CD8-positive, alpha-beta T cell (primary cell): ENCODE measurements at regions of chr1 and their contacts with region 1.

Region 1: DNA sequence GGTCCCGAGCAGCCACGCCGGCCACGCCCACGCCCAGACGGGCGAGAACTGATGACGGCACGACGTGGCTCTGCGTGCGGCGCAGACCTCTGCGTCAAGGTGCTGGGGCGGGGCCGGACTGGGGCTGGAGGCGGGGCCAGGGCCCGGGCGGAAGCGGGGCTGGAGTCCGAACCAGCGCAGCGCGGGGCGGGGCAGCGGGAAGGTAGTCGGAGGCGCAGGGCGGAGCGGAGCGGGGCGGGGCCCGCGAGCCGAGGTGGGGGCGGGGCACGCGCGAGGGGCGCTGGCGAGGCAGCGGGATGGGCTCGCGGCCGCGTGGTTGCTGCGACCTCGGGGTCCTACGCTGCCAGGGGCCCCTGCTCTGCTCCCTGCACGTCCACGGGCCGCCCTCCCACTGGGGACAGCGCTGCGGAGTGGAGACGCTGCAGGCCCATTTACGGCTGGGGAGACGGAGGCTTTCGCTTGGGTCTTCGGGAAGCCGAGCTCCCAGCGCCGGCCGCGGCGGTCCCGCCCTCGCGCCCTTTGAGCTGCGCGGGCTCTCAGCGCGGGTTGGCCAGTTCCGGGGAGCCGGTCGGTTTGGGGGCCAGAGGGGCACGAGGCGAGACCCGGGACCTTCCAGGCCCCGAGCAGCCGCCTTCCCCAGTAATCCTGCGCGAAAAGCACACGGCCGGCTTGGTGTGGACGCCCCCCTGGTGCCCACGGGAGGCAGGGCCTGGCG is at the start of gene PEX10:
- DNase-seq: peak; percentile 97 to 100 (median 99)
- ATAC-seq: peak; percentile 91
- H3K4me3 ChIP-seq: peak within 1 kb of the TSS; percentile 64 to 89
- H3K4me3 Mint-ChIP-seq: peak within 1 kb of the TSS; percentile 86
- H3K27ac ChIP-seq: peak within 1 kb of the TSS; percentile 81 to 93
- H3K27ac Mint-ChIP-seq: peak within 1 kb of the TSS; percentile 93
- H3K4me1 ChIP-seq: peaks cover 53% of the 10 kb centered on the region
- H3K4me1 Mint-ChIP-seq: peaks cover 40% of the 10 kb centered on the region
- H3K27me3 ChIP-seq: no peaks in the 10 kb centered on the region
- H3K27me3 Mint-ChIP-seq: no peaks in the 10 kb centered on the region
- CTCF ChIP-seq: no peak
- total RNA-seq, gene PEX10: 11.6 to 11.8 TPM

Region 2: GRCh38 chr1:2061065-2061778 is 351.5 kb before region 1 on chr1:
- CTCF ChIA-PET with region 1: no interaction called
- POLR2A ChIA-PET with region 1: no interaction called
- intact Hi-C with region 1: no loop called
- DNase-seq: no peak
- ATAC-seq: no peak
- H3K4me3 ChIP-seq: no peak overlapping the region
- H3K4me3 Mint-ChIP-seq: no peak overlapping the region
- H3K27ac ChIP-seq: no peak overlapping the region
- H3K27ac Mint-ChIP-seq: no peak overlapping the region
- H3K4me1 ChIP-seq: no peaks in the 10 kb centered on the region
- H3K4me1 Mint-ChIP-seq: peaks cover 8% of the 10 kb centered on the region
- H3K27me3 ChIP-seq: no peaks in the 10 kb centered on the region
- H3K27me3 Mint-ChIP-seq: no peaks in the 10 kb centered on the region
- CTCF ChIP-seq: no peak

Region 3: DNA sequence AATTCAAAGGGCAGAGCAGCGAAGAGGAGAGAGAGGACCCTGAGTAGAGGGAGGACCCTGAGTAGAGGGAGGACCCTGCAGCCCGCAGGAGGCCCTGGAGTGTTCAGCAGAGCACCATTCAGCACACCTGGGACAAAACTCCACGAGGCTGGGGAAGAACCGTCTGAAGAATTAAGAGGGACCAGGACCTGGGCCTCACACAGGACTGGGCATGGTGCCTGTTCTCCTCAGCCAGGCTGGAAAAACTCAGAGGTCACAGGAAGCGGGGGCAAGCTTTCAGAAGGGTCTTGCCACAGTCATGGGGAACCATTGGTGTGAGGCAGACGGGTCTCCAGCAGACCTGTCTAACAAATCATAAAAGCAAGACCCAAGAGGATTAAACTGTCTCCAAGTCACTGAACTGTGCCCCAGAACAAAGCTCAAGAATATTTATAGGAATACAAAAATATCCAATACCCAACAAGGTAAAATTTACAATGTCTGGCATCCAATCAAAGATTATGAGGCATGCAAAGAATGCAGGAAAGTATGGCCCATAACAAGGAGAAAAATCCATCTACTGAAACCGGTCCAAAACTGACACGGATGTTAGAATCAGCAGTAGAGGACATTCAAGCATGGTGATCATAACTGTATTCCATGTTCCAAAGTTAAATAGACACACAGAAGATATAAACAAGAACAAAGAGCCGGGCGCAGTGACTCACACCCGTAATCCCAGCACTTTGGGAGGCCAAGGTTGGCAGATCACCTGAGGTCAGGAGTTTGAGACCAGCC is 51.9 kb before region 1 on chr1:
- CTCF ChIA-PET with region 1: no interaction called
- POLR2A ChIA-PET with region 1: no interaction called
- intact Hi-C with region 1: no loop called
- DNase-seq: peak in 1 of 9 experiments; percentile 11
- ATAC-seq: no peak
- H3K4me3 ChIP-seq: no peak overlapping the region
- H3K4me3 Mint-ChIP-seq: no peak overlapping the region
- H3K27ac ChIP-seq: no peak overlapping the region
- H3K27ac Mint-ChIP-seq: no peak overlapping the region
- H3K4me1 ChIP-seq: no peaks in the 10 kb centered on the region
- H3K4me1 Mint-ChIP-seq: no peaks in the 10 kb centered on the region
- H3K27me3 ChIP-seq: no peaks in the 10 kb centered on the region
- H3K27me3 Mint-ChIP-seq: no peaks in the 10 kb centered on the region
- CTCF ChIP-seq: no peak

Region 4: DNA sequence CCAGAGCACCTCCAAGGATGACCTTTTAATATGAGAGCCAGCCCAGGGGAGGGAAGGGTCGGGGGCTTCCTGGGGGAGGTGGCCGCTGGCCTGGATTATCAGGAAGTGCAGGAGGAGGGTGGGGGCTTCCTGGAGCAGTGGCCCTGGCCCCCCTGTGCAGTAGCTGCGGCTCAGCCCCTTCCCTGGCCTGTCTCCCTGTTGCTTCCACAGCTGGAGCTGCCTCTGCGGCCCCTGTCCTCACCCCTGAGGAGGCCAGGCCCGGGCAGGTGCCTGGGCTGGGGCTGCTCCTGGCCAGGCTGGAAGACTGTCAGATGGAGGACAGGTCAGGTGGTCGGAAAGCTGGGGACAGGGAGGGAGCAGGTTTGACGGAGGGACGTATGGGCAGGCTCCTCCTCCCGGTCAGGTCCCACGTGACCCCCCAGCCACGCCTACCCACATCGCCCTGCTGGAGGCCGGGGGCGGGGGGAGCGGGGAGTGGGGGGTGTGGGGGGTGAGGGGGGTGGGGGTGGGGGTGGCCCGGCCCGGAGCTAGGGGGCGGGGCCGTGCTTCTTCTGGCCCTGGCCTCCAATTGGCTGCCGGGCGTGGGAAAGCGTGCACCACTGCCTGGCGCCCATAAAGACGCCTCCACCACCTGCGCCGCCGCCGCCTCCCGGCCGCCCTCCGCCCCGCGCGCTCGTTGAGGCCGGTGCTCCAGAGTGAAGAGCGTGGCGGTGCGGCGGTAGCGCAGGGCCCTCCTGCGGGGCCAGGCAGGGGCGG is 133.3 kb after region 1 on chr1:
- CTCF ChIA-PET with region 1: interaction called, 45 read pairs
- POLR2A ChIA-PET with region 1: interaction called, 27 read pairs
- intact Hi-C with region 1: loop called (anchors 1 kb)
- DNase-seq: peak; percentile 85 to 96 (median 89)
- ATAC-seq: peak; percentile 42
- H3K4me3 ChIP-seq: peak overlapping the region; percentile 87 to 91
- H3K4me3 Mint-ChIP-seq: peak overlapping the region; percentile 91
- H3K27ac ChIP-seq: peak overlapping the region; percentile 79 to 99
- H3K27ac Mint-ChIP-seq: peak overlapping the region; percentile 96
- H3K4me1 ChIP-seq: peaks cover 40% of the 10 kb centered on the region
- H3K4me1 Mint-ChIP-seq: peaks cover 31% of the 10 kb centered on the region
- H3K27me3 ChIP-seq: no peaks in the 10 kb centered on the region
- H3K27me3 Mint-ChIP-seq: no peaks in the 10 kb centered on the region
- CTCF ChIP-seq: no peak

Region 5: GRCh38 chr1:2642560-2643413 is 230.1 kb after region 1 on chr1:
- CTCF ChIA-PET with region 1: no interaction called
- POLR2A ChIA-PET with region 1: no interaction called
- intact Hi-C with region 1: loop called (anchors 1 kb)
- DNase-seq: peak; percentile 88 to 97 (median 96)
- ATAC-seq: peak; percentile 84
- H3K4me3 ChIP-seq: peak overlapping the region; percentile 63 to 95
- H3K4me3 Mint-ChIP-seq: peak overlapping the region; percentile 85
- H3K27ac ChIP-seq: peak overlapping the region; percentile 91 to 93
- H3K27ac Mint-ChIP-seq: peak overlapping the region; percentile 88
- H3K4me1 ChIP-seq: peaks cover 17% of the 10 kb centered on the region
- H3K4me1 Mint-ChIP-seq: peaks cover 13% of the 10 kb centered on the region
- H3K27me3 ChIP-seq: no peaks in the 10 kb centered on the region
- H3K27me3 Mint-ChIP-seq: no peaks in the 10 kb centered on the region
- CTCF ChIP-seq: no peak

Region 6: DNA sequence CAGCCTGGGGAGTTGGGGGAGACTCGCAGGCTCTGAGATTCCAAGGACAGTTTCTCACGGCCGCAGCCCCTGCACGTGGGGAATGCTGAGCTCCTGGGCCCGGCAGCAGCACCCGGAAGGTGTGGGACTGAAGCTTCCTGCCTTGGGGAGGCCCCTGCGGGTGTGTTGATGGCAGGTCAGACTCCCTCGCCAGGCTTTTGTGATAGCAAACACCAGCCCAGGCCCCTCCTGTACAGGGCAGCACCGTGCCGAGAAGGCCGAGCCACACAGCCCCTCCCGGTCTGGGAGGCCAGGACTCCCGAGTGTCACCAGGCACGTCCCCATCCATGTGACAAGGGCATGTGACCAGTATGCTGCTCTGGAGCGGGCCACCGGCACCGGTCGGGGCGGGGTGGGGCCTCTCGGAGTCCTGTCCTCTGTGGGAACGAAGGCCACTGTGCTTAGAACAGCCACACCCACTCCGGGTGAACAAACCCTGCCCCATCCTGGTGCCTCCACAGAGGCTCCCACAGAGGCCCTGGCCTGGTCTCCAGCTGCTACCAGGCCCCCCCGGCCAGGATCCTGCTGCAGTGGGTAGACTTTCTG is 1010.7 kb after region 1 on chr1:
- CTCF ChIA-PET with region 1: no interaction called
- POLR2A ChIA-PET with region 1: no interaction called
- intact Hi-C with region 1: loop called in 1 of 2 experiments (anchors 10 kb)
- DNase-seq: no peak
- ATAC-seq: no peak
- H3K4me3 ChIP-seq: no peak overlapping the region
- H3K4me3 Mint-ChIP-seq: no peak overlapping the region
- H3K27ac ChIP-seq: no peak overlapping the region
- H3K27ac Mint-ChIP-seq: no peak overlapping the region
- H3K4me1 ChIP-seq: no peaks in the 10 kb centered on the region
- H3K4me1 Mint-ChIP-seq: no peaks in the 10 kb centered on the region
- H3K27me3 ChIP-seq: no peaks in the 10 kb centered on the region
- H3K27me3 Mint-ChIP-seq: no peaks in the 10 kb centered on the region
- CTCF ChIP-seq: no peak